RWPE1 (cell line): ENCODE measurements at regions of chr16 and their contacts with region 1.

Region 1: GRCh38 chr16:85366031-85366763 is 246.9 kb upstream of the GSE1 start:
- DNase-seq: no peak
- H3K27ac ChIP-seq: peak overlapping the region; percentile 95
- CTCF ChIP-seq: no peak

Region 2: GRCh38 chr16:84806256-84806889 is 559.8 kb before region 1 on chr16:
- CTCF ChIA-PET with region 1: no interaction called
- POLR2A ChIA-PET with region 1: no interaction called
- DNase-seq: peak; percentile 78
- H3K27ac ChIP-seq: no peak overlapping the region
- CTCF ChIP-seq: no peak

Region 3: DNA sequence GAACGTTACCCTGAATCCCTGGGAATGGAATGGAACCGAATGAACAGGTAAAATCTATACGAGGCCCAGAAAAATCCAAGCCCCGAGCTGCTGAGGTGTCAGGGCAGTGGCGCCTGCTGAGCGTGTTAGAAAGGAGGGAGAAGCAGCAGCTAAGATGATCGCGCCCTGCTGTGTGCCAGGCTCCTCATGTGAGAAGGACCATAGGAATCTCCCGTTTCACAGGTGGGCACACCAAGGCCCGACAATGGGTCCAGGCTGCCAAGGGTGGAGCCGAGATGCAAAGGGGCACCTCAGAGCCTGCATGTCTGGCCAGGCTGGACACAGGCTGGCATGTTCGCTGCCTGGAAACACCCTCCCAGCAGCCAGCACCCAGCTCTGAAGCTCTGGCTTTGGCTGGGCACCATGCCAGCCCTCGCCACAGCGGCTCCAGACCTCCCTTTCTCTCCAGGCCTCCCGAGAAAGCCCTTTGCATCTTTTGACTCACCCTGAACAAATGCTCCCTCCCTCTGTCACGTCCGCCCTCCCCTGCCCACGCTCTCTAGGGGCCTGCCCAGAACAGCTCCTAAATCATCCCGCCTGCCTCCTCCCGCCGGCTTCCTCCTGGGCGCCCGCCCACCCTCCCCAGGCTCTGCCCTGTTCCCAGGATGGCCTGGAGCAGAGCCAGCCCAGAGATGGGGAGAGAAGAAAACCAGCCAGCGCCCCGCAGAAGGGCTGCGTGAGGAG is 29.2 kb after region 1 on chr16:
- CTCF ChIA-PET with region 1: interaction called, 12 read pairs
- POLR2A ChIA-PET with region 1: no interaction called
- DNase-seq: peak; percentile 96
- H3K27ac ChIP-seq: peak overlapping the region; percentile 100
- CTCF ChIP-seq: no peak

Region 4: DNA sequence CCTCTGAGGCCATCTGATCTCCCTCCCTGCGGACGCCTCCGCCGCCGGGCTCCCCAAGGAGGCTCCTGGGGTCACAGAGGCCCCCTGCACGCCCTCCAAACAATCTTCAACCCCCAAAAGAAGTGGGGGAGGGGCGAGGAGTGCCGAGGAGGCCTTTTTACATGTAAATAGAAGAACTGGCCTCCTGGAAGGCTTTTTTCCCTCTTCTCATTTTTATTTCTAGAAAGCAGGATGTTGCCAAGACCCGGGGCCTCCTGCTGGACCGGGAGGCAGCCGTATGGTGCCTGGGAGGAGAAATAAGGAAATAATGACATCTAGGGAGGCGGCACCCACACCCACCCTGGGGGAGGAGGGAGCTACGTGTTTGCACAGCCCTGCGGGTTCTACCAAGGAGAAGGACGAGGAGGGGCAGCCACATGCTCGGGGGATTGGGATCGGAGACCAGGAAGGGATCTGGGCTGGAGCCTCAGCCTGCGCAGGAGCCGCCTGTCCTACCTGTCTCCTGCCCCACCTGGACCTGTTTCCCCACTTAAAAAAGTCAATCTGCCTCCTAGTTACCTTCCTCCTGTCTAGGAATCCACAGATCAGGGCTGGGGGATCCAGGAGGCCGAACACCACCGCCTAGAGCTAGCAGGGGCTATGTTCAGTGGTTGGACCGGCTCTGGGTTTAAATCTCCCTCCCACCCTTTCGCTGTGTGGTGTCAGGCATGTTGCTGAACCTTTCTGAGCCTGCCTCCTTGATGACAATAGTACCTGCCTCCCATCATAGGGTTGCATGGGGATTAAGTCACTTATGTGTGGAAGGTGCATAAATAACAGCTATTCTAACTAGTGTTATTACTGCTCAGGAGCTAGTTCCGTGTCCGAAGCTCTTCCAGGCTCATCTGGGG is 71.2 kb after region 1 on chr16:
- CTCF ChIA-PET with region 1: no interaction called
- POLR2A ChIA-PET with region 1: no interaction called
- DNase-seq: no peak
- H3K27ac ChIP-seq: no peak overlapping the region; the same call in 1 of the 2 replicates
- CTCF ChIP-seq: no peak